Right ventricle myocardium inferior (tissue), 1 donor: ENCODE measurements at regions of chr12 and their contacts with region 1.

Region 1: DNA sequence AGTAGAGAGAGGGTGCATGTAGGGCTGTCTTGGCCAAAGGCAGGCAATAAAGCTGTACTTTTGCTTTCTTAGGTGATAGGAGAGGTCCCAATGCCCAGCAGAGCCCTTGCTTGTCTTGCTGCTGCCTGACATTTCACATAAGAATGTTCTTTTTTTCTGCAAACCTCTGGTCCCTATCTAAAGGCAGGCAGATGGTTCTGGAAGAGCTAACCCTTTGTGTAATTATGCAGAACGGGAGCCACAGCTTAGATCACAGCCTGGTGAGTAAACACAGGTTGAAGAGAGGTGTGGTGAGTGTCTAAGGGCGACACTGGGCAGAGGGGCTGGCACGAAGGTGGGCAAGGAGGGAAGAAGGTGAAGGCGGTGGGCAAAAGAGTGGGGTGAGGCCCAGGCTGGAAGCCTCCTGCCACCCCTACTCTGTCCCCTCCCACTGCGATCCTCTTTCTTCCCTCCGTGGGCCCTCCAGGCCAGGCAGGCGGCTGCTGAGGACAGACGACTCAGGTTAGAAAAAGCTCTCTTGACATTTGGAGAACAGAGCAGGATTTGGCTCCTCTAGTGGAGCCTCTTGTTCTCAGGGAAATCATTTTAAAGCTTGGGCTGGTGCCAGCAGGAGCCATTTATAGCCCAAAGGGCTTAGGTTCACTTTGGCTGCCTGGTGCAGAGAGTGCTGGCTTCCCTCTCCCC is 42.8 kb downstream of the PRMT8 start:
- DNase-seq: no peak
- ATAC-seq: peak; percentile 71

Region 2: GRCh38 chr12:3587402-3588013 is 53.7 kb after region 1 on chr12:
- intact Hi-C with region 1: no loop called
- DNase-seq: no peak
- ATAC-seq: no peak

Region 3: DNA sequence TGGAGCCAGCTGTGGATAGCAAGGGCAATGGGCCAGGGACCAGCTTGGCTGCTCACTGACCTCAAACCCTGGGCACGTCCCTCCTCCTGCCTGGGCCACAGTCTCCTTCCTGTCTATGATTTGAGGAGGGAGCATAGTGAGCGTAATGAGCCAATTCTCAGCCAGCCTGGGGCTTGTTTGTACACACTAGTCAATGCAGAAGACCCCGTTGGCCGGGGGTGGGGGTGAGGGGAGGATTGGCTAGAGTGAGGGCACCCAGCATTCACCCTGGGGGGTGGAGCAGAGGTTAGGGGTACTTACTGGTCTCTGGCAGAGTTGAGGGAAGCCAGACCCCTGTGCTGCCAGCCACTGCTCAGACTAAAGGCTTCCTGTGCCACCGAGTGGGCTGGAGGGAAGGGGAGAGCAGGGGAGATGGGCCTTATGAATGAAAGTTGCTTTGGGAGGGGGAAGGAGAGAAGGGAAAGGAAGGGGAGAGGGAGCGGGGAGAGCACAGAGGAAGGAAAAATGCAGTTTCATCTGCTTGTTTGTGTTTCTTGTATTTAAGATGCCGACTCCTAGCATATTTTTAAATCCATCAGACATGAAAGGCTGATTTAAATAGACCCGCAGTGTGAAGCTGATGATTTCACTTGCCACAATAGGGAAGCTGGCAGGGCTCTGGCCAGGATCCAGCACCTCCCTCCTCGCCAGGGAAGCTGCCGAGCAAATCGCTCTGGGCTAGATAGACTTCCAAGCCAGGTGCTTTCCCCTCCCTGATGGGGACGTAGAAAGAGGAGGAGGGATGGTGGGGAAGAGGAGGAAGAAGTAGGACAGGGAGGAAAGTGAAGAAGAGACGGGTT is 71.1 kb after region 1 on chr12:
- intact Hi-C with region 1: loop called (anchors 5 kb)
- DNase-seq: peak; percentile 83
- ATAC-seq: peak; percentile 77

Region 4: GRCh38 chr12:3770886-3771285 is 237.0 kb after region 1 on chr12:
- intact Hi-C with region 1: loop called (anchors 2 kb)
- DNase-seq: no peak
- ATAC-seq: no peak